Dendritic cell treated with granulocyte-macrophage colony-stimulating factor and Interleukin-4, amounts not matched to agents 40 ng/mL and 50 ng/mL, for 4 days (primary cell): ENCODE measurements at regions of chr11 and their contacts with region 1.

Region 1: GRCh38 chr11:61254403-61255025 is 13.5 kb downstream of the PGA5 start:
- H3K4me3 Mint-ChIP-seq: no peak overlapping the region
- H3K27ac Mint-ChIP-seq: no peak overlapping the region
- H3K4me1 Mint-ChIP-seq: peaks cover 33% of the 10 kb centered on the region
- H3K27me3 Mint-ChIP-seq: peaks cover 7% of the 10 kb centered on the region

Region 2: GRCh38 chr11:61309739-61310138 is 55.2 kb after region 1 on chr11:
- intact Hi-C with region 1: loop called (anchors 10 kb)
- H3K4me3 Mint-ChIP-seq: no peak overlapping the region
- H3K27ac Mint-ChIP-seq: no peak overlapping the region
- H3K4me1 Mint-ChIP-seq: no peaks in the 10 kb centered on the region
- H3K27me3 Mint-ChIP-seq: no peaks in the 10 kb centered on the region

Region 3: GRCh38 chr11:61332797-61333549 is 78.5 kb after region 1 on chr11 and contains the starts of genes DDB1 and TKFC:
- intact Hi-C with region 1: loop called (anchors 10 kb)
- H3K4me3 Mint-ChIP-seq: peak within 1 kb of the TSS; percentile 87
- H3K27ac Mint-ChIP-seq: peak within 1 kb of the TSS; percentile 83
- H3K4me1 Mint-ChIP-seq: peaks cover 46% of the 10 kb centered on the region
- H3K27me3 Mint-ChIP-seq: no peaks in the 10 kb centered on the region

Region 4: DNA sequence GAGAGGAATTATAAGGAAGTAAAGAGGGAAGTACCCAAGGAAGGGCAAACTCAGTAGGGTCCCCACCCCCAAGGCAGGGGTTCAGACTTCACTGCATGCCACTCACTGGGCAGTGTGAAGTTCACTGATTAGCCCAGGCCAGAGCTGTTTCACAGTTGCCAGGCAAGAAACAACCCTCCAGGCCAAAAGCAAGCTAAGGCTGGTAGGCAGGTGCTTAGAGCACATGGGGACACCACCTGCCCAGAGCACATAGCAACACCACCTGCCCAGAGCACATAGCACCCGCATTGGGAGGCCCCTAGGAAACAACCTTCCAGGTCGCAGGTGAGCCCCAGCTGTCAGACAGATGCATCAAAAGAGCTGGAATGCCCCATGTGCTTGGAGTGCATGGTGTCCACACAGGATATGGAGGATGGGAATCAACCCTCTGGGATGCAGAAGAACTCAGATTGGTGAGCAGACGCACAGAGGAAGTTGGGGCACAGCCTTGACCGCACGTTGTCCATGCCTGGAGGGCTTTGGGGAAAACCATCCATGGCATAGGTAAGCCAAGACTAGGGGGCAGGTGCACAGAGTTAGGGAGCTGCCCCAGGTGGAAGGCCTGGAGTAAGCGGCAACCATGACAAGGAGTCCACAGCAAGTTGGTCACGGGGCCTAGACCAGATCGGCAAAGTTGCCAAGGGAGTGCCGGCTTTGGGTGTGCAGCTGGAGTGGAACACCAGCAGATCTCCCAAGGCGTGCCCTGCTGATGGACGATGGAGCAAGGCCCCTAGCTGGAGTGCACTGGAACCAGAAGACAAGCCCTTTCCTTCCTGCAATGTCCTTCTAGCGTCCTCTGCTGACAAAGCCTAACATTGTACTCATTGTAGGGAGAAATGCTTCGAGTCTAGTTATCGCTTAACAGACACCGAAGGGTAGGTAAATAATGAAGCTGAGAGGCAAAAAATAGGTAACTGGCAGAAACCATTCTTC is 130.0 kb after region 1 on chr11:
- intact Hi-C with region 1: loop called (anchors 10 kb)
- H3K4me3 Mint-ChIP-seq: no peak overlapping the region
- H3K27ac Mint-ChIP-seq: no peak overlapping the region
- H3K4me1 Mint-ChIP-seq: peaks cover 30% of the 10 kb centered on the region
- H3K27me3 Mint-ChIP-seq: peaks cover 3% of the 10 kb centered on the region